Left cardiac atrium (tissue), 4 donors: ENCODE measurements at regions of chr11 and their contacts with region 1.

Region 1: DNA sequence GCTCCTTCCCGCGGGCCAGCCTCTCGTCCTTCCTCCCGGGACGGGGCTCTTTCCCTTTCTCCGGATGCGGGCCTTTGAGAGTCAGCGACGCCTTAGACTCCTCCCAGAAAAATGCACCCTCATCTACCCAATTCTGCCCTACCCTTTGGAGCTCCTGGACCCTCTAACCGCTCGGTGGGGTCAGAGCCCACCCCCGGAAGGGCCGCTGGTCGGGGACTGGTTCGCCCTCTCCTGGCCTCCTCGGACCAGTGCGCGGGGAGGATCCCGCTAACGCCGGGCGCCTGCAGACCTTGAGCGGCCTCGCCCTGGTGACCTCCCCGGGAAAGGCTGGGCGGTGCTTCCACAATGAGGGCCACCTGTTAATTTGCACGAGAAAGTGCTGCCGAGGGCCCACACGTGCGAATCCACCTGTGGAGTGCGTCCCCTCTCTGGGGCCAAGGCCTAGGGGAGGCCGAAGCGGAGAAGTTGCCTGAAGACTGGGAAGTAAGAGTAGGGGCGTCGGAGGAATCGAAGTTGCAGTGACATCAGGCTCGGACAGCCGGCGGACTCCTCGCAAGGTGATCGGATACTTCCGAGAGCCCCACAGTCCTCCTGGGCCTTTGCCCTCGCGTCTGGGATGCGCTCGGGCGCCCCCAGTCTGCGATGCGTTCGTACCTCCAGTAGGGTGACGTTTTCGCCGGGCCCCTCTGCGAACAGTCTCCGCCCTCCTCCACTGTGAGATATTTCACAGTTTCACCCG is 61.5 kb downstream of the ENDOD1 start:
- DNase-seq: peak; percentile 94
- ATAC-seq: peak; percentile 90 to 91

Region 2: GRCh38 chr11:95067039-95067840 is 83.9 kb before region 1 on chr11:
- intact Hi-C with region 1: loop called in 1 of 2 experiments (anchors 2 kb)
- DNase-seq: peak; percentile 90
- ATAC-seq: peak; percentile 88 to 90

Region 3: GRCh38 chr11:95089620-95090542 is 61.2 kb before region 1 on chr11 and contains the start of gene ENDOD1:
- intact Hi-C with region 1: loop called in 1 of 2 experiments (anchors 10 kb)
- DNase-seq: peak; percentile 88
- ATAC-seq: peak; percentile 98 to 99
- total RNA-seq, gene ENDOD1: 13.4 to 19.8 TPM

Region 4: DNA sequence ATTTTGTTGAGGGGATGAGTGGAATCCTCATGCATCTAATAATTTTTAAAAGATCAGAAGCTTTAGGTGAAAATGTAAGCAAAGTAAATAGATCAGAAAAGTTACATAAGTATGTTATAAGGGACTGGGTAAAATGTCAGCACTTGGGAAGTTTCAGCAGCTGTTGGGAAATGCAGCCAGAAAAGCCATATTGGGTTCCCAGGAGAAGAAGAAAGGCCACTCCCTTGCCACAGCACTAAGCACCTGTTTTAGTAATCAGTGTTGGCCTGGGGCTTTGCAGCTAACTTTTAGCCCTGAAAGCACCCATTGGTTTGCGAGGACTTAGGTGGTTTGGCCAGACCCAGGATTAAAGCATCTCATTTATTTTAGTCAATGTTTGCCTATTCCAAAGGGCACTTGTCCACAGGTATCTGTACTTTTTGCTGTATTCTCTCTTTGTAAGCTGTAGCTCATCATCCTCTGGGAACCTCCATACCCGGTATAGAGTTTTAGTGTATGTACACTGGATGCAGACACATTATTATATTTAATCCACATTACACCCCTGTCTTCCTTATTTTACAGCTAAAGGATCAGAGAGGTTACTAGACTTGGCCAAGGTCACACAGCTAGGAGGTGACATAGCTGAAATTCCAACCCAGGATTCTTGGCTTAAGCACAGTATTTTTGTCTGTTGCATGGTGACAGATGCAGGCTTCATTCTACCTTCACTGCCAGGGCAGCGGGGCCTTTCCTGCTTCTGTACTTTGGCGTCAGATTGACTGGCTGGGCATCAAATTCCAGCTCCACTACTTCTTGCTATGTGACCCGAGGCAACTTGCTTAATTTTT is 207.6 kb after region 1 on chr11:
- intact Hi-C with region 1: no loop called
- DNase-seq: peak; percentile 41
- ATAC-seq: peak; percentile 32 to 50

Region 5: DNA sequence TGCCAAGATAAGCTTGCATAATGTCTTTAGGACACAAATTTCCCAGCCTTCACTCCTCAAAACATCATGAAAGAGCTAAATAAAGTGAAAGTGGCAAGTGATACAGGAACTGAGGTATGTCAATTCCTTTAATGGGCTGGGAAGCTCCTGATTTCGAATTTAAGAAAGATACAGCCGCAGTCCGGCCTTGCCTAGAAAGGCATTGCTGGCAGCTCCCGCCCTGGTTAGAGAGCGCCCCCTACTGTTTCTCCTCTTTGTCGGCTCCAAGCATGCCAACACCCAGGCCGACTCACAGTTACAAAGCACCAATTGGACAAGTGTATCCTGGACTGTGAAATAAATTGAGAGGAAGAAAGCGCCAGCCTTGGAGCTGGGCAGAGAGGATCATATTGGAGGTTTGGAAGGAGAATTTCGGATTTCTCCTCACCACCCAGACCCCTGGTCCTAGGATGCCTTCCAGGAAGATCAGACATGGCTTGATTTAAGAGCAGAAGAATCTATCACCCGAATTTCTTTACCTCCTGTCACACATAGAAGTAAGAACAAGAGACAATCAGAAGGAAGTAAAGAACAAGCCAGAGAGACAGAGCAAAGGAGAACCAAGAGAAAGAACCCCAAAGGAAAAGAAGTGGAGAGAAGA is 554.5 kb after region 1 on chr11:
- intact Hi-C with region 1: loop called (anchors 2 to 5 kb)
- DNase-seq: peak; percentile 88
- ATAC-seq: peak; percentile 98 to 99

Region 6: GRCh38 chr11:95764267-95764898 is 613.3 kb after region 1 on chr11:
- intact Hi-C with region 1: loop called (anchors 2 to 5 kb)
- DNase-seq: no peak
- ATAC-seq: peak; percentile 61 to 65